PC-3 (cell line): ENCODE measurements at regions of chr4 and their contacts with region 1.

Region 1: GRCh38 chr4:140099983-140100382 is 54.0 kb downstream of the MAML3 start:
- DNase-seq: peak; percentile 63
- ATAC-seq: peak; percentile 37; the same call in 1 of the 2 replicates
- H3K4me3 ChIP-seq: no peak overlapping the region
- H3K27ac ChIP-seq: peak overlapping the region; percentile 98
- H3K4me1 ChIP-seq: peaks cover 79% of the 10 kb centered on the region
- H3K27me3 ChIP-seq: no peaks in the 10 kb centered on the region
- CTCF ChIP-seq: no peak

Region 2: DNA sequence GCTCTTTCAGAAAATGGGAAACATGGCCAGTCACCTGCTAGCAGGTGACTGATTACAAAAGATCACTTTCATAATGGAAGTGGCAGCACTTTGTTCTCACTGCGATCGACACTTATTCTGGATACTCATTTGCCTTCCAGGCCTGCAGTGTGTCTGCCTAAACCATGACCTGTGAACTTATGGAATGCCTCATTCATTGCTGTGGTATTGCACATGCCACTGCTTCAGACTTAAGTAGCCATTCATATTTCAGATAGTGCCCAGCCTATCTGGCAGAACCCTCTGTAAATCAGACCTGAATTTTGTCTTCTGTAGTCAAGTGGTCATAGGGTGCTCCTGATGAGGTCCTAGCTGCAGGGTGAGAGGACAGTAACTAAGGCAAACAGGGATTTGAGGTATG is 457.6 kb before region 1 on chr4:
- CTCF ChIA-PET with region 1: interaction called, 16 read pairs
- POLR2A ChIA-PET with region 1: no interaction called
- intact Hi-C with region 1: no loop called
- DNase-seq: peak; percentile 22
- ATAC-seq: no peak
- H3K4me3 ChIP-seq: no peak overlapping the region
- H3K27ac ChIP-seq: no peak overlapping the region
- H3K4me1 ChIP-seq: peaks cover 43% of the 10 kb centered on the region
- H3K27me3 ChIP-seq: no peaks in the 10 kb centered on the region
- CTCF ChIP-seq: no peak

Region 3: DNA sequence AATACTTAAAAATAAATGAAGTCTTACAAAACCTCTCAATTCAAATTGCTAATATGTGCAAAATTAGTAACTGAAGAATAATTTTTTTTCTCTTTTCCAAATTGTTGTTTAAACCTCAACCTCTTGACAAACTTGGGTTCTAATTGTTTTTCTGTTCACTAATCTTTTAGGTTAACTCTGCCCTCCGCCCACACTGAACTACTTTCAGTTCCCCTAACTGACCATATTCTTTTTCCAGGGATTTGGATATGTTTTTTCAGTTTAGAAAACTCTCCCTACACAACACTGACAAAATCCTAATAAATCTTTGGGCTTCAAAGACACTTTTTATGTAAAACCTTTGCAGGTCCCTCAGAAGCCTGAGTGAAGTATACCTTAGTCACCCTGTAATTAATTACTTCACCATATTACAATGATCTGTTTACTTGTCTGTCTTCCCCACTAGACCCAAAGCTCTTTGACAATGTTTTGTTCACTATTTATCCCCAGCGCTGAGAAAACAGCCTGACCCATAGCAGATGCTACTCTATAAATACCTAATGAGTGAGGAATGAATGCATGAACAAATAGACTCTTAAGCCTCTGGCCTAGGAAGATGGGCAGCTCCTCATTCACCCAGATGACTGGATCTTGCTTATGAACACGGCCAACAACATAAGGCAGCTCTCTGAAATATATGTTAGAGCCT is 80.9 kb before region 1 on chr4:
- CTCF ChIA-PET with region 1: no interaction called
- POLR2A ChIA-PET with region 1: no interaction called
- intact Hi-C with region 1: loop called (anchors 2 kb)
- DNase-seq: peak; percentile 87
- ATAC-seq: peak; percentile 90
- H3K4me3 ChIP-seq: peak overlapping the region; percentile 36; the same call in 1 of the 2 replicates
- H3K27ac ChIP-seq: peak overlapping the region; percentile 94
- H3K4me1 ChIP-seq: peaks cover 37% of the 10 kb centered on the region
- H3K27me3 ChIP-seq: no peaks in the 10 kb centered on the region
- CTCF ChIP-seq: no peak

Region 4: GRCh38 chr4:140061194-140061593 is 38.8 kb before region 1 on chr4:
- CTCF ChIA-PET with region 1: no interaction called
- POLR2A ChIA-PET with region 1: no interaction called
- intact Hi-C with region 1: no loop called
- DNase-seq: no peak
- ATAC-seq: no peak
- H3K4me3 ChIP-seq: no peak overlapping the region
- H3K27ac ChIP-seq: no peak overlapping the region
- H3K4me1 ChIP-seq: peaks cover 9% of the 10 kb centered on the region
- H3K27me3 ChIP-seq: no peaks in the 10 kb centered on the region
- CTCF ChIP-seq: no peak

Region 5: GRCh38 chr4:140135529-140136088 is 35.6 kb after region 1 on chr4:
- CTCF ChIA-PET with region 1: no interaction called
- POLR2A ChIA-PET with region 1: interaction called, 4 read pairs
- intact Hi-C with region 1: loop called (anchors 2 kb)
- DNase-seq: peak; percentile 17
- ATAC-seq: no peak
- H3K4me3 ChIP-seq: no peak overlapping the region
- H3K27ac ChIP-seq: peak overlapping the region; percentile 33
- H3K4me1 ChIP-seq: peaks cover 71% of the 10 kb centered on the region
- H3K27me3 ChIP-seq: no peaks in the 10 kb centered on the region
- CTCF ChIP-seq: no peak

Region 6: GRCh38 chr4:140222171-140222570 is 122.2 kb after region 1 on chr4:
- CTCF ChIA-PET with region 1: no interaction called
- POLR2A ChIA-PET with region 1: no interaction called
- intact Hi-C with region 1: no loop called
- DNase-seq: peak; percentile 63
- ATAC-seq: peak; percentile 89
- H3K4me3 ChIP-seq: no peak overlapping the region
- H3K27ac ChIP-seq: no peak overlapping the region
- H3K4me1 ChIP-seq: peaks cover 4% of the 10 kb centered on the region; the same call in 1 of the 2 replicates
- H3K27me3 ChIP-seq: no peaks in the 10 kb centered on the region
- CTCF ChIP-seq: no peak

Region 7: DNA sequence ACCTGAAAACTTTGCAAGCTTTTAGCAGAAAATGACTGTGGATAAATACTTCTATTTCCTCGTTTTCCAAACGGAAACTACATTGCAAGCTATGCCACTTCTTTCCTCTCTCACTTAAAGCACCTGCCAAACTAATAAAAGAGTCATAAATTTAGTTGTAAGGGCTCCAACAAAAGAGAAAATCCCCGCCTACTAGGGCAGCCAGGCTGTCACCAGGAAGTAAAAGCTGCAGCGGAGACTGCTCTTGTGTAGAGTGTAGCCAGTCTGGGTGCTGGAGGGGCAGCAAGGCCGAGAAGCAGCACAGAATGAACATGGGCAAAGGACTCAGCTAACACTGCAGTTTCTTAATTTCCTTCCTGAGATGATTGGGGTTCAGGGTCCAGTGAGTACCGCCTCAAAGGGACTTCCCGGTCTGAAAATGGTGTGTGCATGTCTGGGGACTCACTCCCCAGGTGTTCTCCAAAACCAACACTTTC is 143.3 kb after region 1 on chr4:
- CTCF ChIA-PET with region 1: no interaction called
- POLR2A ChIA-PET with region 1: no interaction called
- intact Hi-C with region 1: loop called (anchors 2 kb)
- DNase-seq: peak; percentile 75
- ATAC-seq: peak; percentile 80
- H3K4me3 ChIP-seq: peak overlapping the region; percentile 21; the same call in 1 of the 2 replicates
- H3K27ac ChIP-seq: peak overlapping the region; percentile 33
- H3K4me1 ChIP-seq: peaks cover 20% of the 10 kb centered on the region
- H3K27me3 ChIP-seq: no peaks in the 10 kb centered on the region
- CTCF ChIP-seq: no peak